H1 (cell line): ENCODE measurements at regions of chr10 and their contacts with region 1.

Region 1: DNA sequence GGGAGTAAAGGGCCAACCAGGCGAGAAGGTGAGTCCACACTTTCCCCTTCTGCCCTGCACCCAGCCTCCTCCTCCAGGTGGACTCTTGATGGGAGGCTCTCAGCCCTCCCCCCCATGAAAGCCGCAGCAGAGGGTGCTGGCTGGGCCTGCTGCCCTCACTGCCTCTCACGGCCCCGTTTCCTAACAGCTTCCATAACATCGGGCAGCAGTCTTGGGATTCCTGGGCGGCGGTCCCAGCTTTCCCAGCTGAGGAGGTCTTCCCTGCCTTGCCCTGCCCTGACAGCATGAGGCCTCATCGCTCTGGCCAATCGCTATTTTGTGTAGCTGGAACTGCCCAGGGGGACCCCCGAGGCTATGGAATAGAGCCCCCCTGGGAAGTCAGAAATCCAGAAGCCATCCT is 76.3 kb downstream of the COL13A1 start:
- DNase-seq: no peak
- H3K4me3 ChIP-seq: no peak overlapping the region
- H3K27ac ChIP-seq: no peak overlapping the region
- H3K4me1 ChIP-seq: peaks cover 9 to 41% (median 27%) of the 10 kb centered on the region in 4 experiments
- H3K27me3 ChIP-seq: no peaks in the 10 kb centered on the region; a peak in 3 of 7 replicates
- CTCF ChIP-seq: no peak
- EP300 ChIP-seq: no peak
- POLR2A ChIP-seq: no peak
- RAD21 ChIP-seq: no peak

Region 2: GRCh38 chr10:69901628-69902505 is 23.8 kb after region 1 on chr10:
- CTCF ChIA-PET with region 1: interaction called, 100 read pairs
- POLR2A ChIA-PET with region 1: interaction called, 3 read pairs
- DNase-seq: peak; percentile 31 to 71
- H3K4me3 ChIP-seq: no peak overlapping the region
- H3K27ac ChIP-seq: no peak overlapping the region
- H3K4me1 ChIP-seq: peaks cover 0 to 15% (median 7%) of the 10 kb centered on the region in 4 experiments; a peak in 3 of 7 replicates
- H3K27me3 ChIP-seq: no peaks in the 10 kb centered on the region
- CTCF ChIP-seq: peak; percentile 72 to 96 (median 89)
- EP300 ChIP-seq: no peak
- POLR2A ChIP-seq: no peak
- RAD21 ChIP-seq: peak; percentile 52 to 73

Region 3: DNA sequence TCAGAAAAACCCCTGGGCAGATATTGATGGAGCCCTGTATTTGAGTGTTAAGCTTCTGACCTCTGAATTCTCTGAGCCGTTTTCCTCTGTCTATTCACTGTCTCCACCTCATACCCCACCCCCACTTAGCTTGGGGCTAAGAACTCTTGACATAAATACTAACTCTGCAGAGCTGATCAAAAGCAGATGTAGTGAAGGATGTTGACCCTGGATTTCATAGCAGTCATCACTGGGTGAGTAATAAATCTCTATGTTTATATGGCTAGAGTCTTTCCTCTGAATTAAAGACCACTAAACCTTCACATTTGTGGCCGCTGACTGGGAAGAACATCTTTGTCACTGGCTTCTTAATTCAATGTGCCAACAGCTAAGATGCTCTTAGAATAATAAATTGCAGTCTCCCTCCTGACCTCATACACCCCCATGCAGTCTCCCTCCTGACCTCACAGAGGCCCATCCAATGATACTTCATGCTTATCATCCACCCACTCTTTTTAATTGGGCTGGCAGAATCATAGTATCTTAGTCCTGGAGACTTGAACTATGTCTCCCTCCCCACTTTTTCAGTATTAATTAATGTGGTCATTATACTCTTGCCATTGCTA is 96.6 kb after region 1 on chr10:
- CTCF ChIA-PET with region 1: no interaction called
- POLR2A ChIA-PET with region 1: no interaction called
- DNase-seq: no peak
- H3K4me3 ChIP-seq: no peak overlapping the region
- H3K27ac ChIP-seq: no peak overlapping the region
- H3K4me1 ChIP-seq: no peaks in the 10 kb centered on the region; a peak in 1 of 7 replicates
- H3K27me3 ChIP-seq: peaks cover 0 to 5% (median 0%) of the 10 kb centered on the region in 4 experiments; a peak in 1 of 7 replicates
- CTCF ChIP-seq: no peak
- EP300 ChIP-seq: no peak
- POLR2A ChIP-seq: no peak
- RAD21 ChIP-seq: no peak